Activated T-helper 2 cell treated with anti-CD3 and anti-CD28 coated beads, Interferon-gamma antibody, Interleukin-2, Interleukin-4, amounts not matched to agents 10 μg/mL and 5 μg/mL and 100 μg/mL, durations not matched to agents 14 hours and 24 hours and 36 hours (primary cell): ENCODE measurements at regions of chr14 and their contacts with region 1.

Region 1: DNA sequence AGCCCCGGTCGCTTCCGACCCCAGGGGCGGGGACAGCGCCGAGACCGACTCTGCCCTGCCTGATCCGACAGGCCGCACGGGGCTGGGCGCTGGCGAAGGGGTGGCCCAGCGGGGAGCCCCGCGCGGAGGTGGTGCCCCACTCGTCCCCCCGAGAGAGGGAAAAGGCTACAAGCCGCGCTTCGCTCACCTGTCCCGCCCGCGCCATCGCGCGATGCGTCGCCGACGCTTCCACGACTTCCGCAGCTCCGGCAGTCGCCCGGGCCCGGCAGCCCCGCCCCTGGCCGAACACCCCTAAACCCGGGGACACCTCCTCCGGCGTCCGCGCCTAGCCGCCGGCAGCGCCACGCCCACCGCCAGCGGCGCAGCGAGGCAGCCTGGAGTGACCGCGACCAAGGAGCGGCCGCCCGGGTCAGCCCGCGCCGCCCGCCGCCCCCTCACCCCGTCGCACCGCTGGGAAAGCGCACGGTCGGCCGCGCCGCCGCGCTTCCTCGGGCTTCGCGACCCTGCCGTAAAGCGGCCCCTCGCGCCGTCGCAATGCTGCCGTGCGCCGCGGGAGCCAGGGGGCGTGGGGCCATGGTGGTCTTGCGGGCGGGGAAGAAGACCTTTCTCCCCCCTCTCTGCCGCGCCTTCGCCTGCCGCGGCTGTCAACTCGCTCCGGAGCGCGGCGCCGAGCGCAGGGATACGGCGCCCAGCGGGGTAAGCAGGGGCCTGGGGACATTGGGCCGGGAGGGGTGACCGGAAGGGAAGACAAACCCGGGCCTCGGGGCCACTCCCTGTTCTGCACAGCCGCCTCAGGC is at the starts of genes BAG5 and COA8:
- DNase-seq: peak; percentile 86
- H3K4me3 Mint-ChIP-seq: peak within 1 kb of the TSS; percentile 96
- H3K27ac Mint-ChIP-seq: peak within 1 kb of the TSS; percentile 74
- H3K4me1 Mint-ChIP-seq: peaks cover 38% of the 10 kb centered on the region
- H3K27me3 Mint-ChIP-seq: no peaks in the 10 kb centered on the region
- total RNA-seq, gene BAG5: 28.2 and 29.2 TPM in 2 replicates
- total RNA-seq, gene COA8: 31.9 and 33.5 TPM in 2 replicates

Region 2: GRCh38 chr14:103333754-103334643 is 228.6 kb before region 1 on chr14 and contains the start of gene EIF5:
- intact Hi-C with region 1: loop called (anchors 1 kb)
- DNase-seq: peak; percentile 98
- H3K4me3 Mint-ChIP-seq: peak within 1 kb of the TSS; percentile 89
- H3K27ac Mint-ChIP-seq: peak within 1 kb of the TSS; percentile 97
- H3K4me1 Mint-ChIP-seq: peaks cover 30% of the 10 kb centered on the region
- H3K27me3 Mint-ChIP-seq: peaks cover 2% of the 10 kb centered on the region
- total RNA-seq, gene EIF5: 261 TPM in 2 replicates

Region 3: DNA sequence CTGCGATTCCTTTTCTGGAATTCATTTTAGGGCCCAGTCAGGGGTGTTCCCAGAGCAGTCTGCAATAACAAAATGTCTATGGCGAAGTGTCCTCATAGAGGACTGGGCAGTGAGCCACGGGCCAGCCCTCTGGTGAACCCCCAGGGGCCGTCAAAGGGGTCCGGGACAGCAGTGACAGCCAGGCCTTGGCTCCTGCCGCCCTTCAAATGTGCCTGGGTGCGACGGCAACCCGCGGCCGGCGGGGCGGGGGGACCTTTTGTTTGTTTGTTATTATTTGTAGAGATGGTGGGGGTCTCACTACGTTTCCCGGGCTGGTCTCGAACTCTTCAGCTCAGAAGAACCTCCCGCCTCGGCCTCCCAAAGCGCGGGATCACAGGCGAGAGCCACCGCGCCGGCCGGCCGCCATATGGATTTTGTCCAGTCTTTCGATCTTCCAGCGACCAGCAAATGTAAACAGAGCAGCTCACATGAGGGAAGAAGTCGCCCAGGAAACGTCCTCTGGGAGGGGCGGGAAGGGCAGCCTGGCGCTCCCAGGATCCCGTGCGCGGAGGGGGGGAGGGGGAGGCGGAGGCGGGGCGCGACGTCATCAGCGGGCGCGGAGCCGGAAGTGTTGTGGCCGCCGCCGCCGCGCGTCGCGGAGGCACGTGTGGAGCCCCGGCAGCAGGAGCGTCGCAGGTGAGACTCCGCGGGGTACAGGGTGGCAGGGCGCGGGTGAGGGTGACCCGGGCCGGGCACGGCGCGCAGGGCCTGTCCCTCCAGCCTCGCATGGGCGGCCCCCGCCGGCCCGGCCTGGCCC is 33.8 kb before region 1 on chr14 and contains the start of gene TRMT61A:
- intact Hi-C with region 1: loop called (anchors 1 kb)
- DNase-seq: peak; percentile 67
- H3K4me3 Mint-ChIP-seq: peak within 1 kb of the TSS; percentile 99
- H3K27ac Mint-ChIP-seq: peak within 1 kb of the TSS; percentile 96
- H3K4me1 Mint-ChIP-seq: peaks cover 15% of the 10 kb centered on the region
- H3K27me3 Mint-ChIP-seq: peaks cover 14% of the 10 kb centered on the region
- total RNA-seq, gene TRMT61A: 13.7 and 15.0 TPM in 2 replicates

Region 4: GRCh38 chr14:103628684-103629502 is 66.3 kb after region 1 on chr14 and contains the start of gene KLC1:
- intact Hi-C with region 1: loop called (anchors 1 kb)
- DNase-seq: peak; percentile 78
- H3K4me3 Mint-ChIP-seq: peak within 1 kb of the TSS; percentile 86
- H3K27ac Mint-ChIP-seq: peak within 1 kb of the TSS; percentile 86
- H3K4me1 Mint-ChIP-seq: peaks cover 26% of the 10 kb centered on the region
- H3K27me3 Mint-ChIP-seq: no peaks in the 10 kb centered on the region
- total RNA-seq, gene KLC1: 161 and 169 TPM in 2 replicates

Region 5: DNA sequence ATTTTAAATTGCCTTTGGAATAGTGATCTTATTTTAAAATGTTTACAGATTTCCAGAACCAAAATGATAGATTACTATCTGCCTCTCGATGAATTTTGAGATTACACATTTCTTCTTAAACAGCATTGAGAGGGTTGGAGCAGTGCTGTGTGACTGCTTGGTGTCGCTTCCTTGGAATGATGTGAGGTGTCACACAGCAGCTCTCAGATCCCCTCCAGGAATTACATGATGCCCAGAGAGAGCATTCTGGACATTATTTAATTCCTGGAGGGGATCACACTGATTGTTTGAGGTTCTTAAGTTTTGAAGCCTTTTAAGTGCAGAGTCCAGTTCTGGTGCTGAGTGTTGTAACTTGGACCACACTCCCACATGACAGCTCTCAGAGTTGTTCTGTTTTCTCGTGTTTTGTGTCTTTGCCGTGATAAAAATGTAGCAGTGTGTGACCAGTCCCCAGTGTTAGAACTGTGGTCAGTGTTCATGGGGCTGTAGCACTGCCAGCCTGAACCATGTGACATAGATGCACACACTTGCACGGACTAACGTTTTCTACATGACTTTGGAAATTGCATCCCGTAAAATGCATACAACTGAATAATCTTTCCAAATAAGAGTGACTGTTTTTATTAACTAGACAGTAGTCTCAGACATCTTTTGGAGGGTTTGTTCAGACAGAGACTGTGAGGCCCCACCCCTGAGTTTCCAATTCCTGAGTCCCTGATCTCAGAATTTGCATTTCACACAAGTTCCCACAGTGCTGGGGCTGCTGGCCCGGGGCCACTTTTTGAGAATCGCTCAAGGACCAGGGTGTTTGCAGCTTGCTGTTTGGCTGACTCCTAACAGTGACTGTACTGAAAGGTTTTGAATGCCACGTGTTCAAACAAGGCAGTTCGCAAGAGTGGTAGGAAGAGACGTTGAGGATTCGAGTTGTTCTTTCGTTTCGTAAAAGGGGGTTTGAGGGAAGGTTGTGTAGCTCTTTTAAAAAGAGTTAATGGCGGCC is 126.6 kb after region 1 on chr14:
- intact Hi-C with region 1: loop called (anchors 10 kb)
- DNase-seq: no peak
- H3K4me3 Mint-ChIP-seq: no peak overlapping the region
- H3K27ac Mint-ChIP-seq: no peak overlapping the region
- H3K4me1 Mint-ChIP-seq: peaks cover 1% of the 10 kb centered on the region
- H3K27me3 Mint-ChIP-seq: no peaks in the 10 kb centered on the region

Region 6: DNA sequence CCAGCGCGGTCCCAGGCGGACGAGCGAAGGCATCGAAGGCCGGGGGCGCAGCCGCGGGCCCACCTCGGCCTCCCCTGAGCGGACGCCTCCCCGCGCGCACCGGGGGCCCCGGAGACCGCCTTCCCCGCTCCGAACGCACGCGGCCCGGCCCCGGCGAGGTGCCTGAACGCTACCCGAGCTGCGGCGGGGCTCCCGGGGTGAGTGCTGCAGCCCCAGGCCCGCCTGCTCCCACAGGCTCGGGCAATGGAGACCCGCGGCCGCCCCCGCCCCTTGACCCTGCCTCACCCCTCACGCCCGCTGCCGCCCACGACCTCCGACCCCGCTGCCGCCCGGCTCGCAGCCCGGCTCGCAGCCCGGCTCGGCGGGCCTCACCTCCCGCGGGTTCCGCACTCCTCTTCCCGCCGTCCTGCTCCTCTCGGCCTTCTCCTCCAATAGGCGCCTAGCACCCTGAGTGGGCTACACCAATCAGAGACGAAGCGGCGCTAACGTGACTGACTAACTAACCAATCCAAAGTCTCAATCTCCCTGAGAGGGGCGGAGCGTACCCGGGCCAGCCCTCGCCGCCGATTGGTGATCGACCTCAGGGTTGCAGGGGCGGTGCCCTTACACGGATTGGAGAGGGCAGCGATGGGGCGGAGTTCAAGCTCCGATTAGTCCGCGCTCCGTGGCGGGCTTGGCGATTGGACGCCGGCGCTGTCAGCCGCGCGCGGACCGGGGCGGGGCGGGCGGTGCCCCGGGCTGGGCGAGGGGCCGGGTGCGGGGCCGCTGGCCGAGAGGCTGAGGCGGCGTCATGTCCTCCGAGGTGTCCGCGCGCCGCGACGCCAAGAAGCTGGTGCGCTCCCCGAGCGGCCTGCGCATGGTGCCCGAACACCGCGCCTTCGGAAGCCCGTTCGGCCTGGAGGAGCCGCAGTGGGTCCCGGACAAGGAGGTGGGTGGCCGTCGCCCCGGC is 152.7 kb after region 1 on chr14 and contains the starts of genes XRCC3 and ZFYVE21:
- intact Hi-C with region 1: loop called (anchors 1 kb)
- DNase-seq: peak; percentile 100
- H3K4me3 Mint-ChIP-seq: peak within 1 kb of the TSS; percentile 91
- H3K27ac Mint-ChIP-seq: peak within 1 kb of the TSS; percentile 89
- H3K4me1 Mint-ChIP-seq: peaks cover 30% of the 10 kb centered on the region
- H3K27me3 Mint-ChIP-seq: no peaks in the 10 kb centered on the region
- total RNA-seq, gene XRCC3: 52.9 and 53.7 TPM in 2 replicates
- total RNA-seq, gene ZFYVE21: 24.6 and 27.5 TPM in 2 replicates